ENCODE measurements at regions of chr9 and their contacts with region 1.

Region 1: GRCh38 chr9:109440797-109441287 is 57.3 kb downstream of the PTPN3 start:
- DNase-seq: peak; percentile 58
- ATAC-seq: peak; percentile 97
- H3K4me3 Mint-ChIP-seq: no peak overlapping the region
- H3K27ac Mint-ChIP-seq: peak overlapping the region; percentile 77
- H3K4me1 Mint-ChIP-seq: peaks cover 9% of the 10 kb centered on the region
- H3K27me3 Mint-ChIP-seq: peaks cover 2% of the 10 kb centered on the region; the same call in 1 of the 2 replicates
- CTCF ChIP-seq: peak; percentile 61

Region 2: DNA sequence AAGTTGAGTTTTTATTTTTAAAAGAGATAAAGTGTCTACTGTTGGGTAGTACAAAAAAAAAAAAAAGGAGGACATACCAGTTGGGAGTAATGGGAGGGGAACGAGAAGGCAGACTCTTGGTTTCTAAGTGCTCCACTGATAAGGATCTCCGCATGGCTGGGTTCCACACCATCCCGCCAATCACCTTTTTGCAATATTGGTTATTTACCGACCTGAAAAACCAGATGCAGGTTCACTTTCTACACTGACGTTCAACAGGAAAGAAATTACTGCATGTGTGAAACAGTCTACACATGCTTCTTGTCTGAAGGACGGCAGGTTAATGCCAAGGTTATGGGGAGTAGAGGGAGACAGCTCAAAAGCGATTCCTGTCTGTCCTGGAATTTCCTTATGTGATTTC is 18.2 kb before region 1 on chr9:
- CTCF ChIA-PET with region 1: interaction called, 11 read pairs
- POLR2A ChIA-PET with region 1: no interaction called
- DNase-seq: no peak
- ATAC-seq: no peak
- H3K4me3 Mint-ChIP-seq: no peak overlapping the region
- H3K27ac Mint-ChIP-seq: no peak overlapping the region
- H3K4me1 Mint-ChIP-seq: peaks cover 15% of the 10 kb centered on the region
- H3K27me3 Mint-ChIP-seq: no peaks in the 10 kb centered on the region
- CTCF ChIP-seq: no peak

Region 3: GRCh38 chr9:109453210-109453842 is 12.5 kb after region 1 on chr9:
- CTCF ChIA-PET with region 1: interaction called, 19 read pairs
- POLR2A ChIA-PET with region 1: no interaction called
- DNase-seq: no peak
- ATAC-seq: no peak
- H3K4me3 Mint-ChIP-seq: no peak overlapping the region
- H3K27ac Mint-ChIP-seq: 0 out of 2 replicates have a peak overlapping the region, but pooled peaks have one; percentile 50
- H3K4me1 Mint-ChIP-seq: peaks cover 25% of the 10 kb centered on the region
- H3K27me3 Mint-ChIP-seq: no peaks in the 10 kb centered on the region
- CTCF ChIP-seq: no peak

Region 4: DNA sequence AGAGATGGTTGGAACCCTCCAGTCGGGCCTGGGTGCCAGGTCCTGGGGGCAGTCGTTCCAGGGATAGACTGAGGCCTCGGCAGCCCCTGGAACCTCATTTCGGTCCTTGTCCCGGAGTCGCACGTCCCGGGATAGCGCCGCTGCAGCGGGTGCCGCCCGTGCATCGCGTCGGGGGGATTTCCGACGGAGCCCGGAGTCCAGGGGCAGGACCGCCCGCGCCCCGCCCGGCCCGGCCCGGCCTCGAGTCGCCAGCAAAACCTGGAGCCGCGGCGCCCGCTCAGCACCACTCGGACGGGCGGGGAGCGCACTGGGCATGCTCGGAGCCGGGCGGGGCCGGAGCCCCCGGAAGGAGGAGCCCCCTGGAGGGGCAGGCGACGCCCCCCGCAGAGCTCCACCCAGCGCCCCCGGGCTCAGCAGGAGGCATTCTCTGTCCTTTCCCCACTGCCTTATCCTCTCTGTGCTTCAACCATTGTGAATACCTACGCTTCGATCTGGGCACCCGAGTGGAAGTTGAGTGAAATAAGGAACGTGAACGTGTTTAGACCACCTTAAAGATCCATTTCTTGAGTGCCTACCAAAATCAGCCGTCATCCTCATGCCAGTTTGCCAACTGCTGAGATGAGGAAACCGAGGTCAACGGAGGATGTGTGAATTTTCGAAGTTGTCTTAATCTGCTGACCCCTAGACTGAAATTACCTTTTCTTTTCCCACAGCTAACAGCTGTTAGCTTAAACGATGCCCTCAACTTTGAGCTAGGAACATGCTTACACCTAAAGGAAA is 59.0 kb after region 1 on chr9:
- CTCF ChIA-PET with region 1: interaction called, 18 read pairs
- POLR2A ChIA-PET with region 1: no interaction called
- DNase-seq: peak; percentile 63
- ATAC-seq: peak; percentile 81
- H3K4me3 Mint-ChIP-seq: peak overlapping the region; percentile 77
- H3K27ac Mint-ChIP-seq: no peak overlapping the region
- H3K4me1 Mint-ChIP-seq: peaks cover 21% of the 10 kb centered on the region
- H3K27me3 Mint-ChIP-seq: peaks cover 71% of the 10 kb centered on the region
- CTCF ChIP-seq: no peak